ENCODE measurements at regions of chr6 and their contacts with region 1.

Region 1: GRCh38 chr6:147651249-147652063 is 143.0 kb downstream of the SAMD5 start:
- DNase-seq: peak; percentile 19 to 28
- ATAC-seq: peak; percentile 71 to 96 (median 85)
- H3K4me3 ChIP-seq: no peak overlapping the region
- H3K27ac ChIP-seq: peak overlapping the region in 1 of 10 donors; percentile 28
- H3K4me1 ChIP-seq: peaks cover 0 to 16% (median 12%) of the 10 kb centered on the region in 9 donors
- H3K27me3 ChIP-seq: no peaks in the 10 kb centered on the region
- CTCF ChIP-seq: peak in 7 of 9 donors; percentile 33 to 59 (median 44)

Region 2: GRCh38 chr6:148166339-148166968 is 515.0 kb after region 1 on chr6:
- intact Hi-C with region 1: loop called in 1 of 10 experiments (anchors 10 kb)
- DNase-seq: peak in 1 of 2 donors; percentile 23
- ATAC-seq: no peak
- H3K4me3 ChIP-seq: no peak overlapping the region
- H3K27ac ChIP-seq: no peak overlapping the region
- H3K4me1 ChIP-seq: no peaks in the 10 kb centered on the region
- H3K27me3 ChIP-seq: no peaks in the 10 kb centered on the region
- CTCF ChIP-seq: peak; percentile 10 to 79 (median 72)